Activated T-helper 2 cell treated with anti-CD3 and anti-CD28 coated beads, Interferon-gamma antibody, Interleukin-2, Interleukin-4, amounts not matched to agents 10 μg/mL and 5 μg/mL and 100 μg/mL, durations not matched to agents 14 hours and 24 hours and 36 hours (primary cell): ENCODE measurements at regions of chr6 and their contacts with region 1.

Region 1: GRCh38 chr6:41787219-41787917 is at the start of gene TOMM6:
- DNase-seq: peak; percentile 95
- H3K4me3 Mint-ChIP-seq: peak within 1 kb of the TSS; percentile 96
- H3K27ac Mint-ChIP-seq: peak within 1 kb of the TSS; percentile 97
- H3K4me1 Mint-ChIP-seq: peaks cover 15% of the 10 kb centered on the region
- H3K27me3 Mint-ChIP-seq: peaks cover 3% of the 10 kb centered on the region
- total RNA-seq, gene TOMM6: 308 and 316 TPM in 2 replicates

Region 2: DNA sequence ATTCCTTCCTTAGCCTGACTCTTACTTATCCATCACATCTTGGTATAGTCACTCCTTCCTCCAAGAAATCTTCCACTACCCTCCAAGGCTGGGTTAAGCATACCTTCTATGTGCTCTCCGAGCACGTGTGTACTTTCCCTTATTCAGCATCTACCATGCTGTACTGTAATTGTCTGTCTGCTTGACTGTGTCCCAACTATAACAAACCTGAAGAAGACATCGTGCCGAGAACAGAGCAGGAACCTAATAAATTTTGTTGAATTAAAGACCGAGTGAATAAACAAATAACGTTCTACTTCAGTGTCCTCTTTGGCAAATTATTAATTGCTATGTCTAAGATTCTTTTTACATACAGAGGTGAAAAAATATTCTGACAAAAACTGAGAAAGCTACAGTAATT is 72.0 kb after region 1 on chr6:
- intact Hi-C with region 1: no loop called
- DNase-seq: no peak
- H3K4me3 Mint-ChIP-seq: no peak overlapping the region
- H3K27ac Mint-ChIP-seq: no peak overlapping the region
- H3K4me1 Mint-ChIP-seq: no peaks in the 10 kb centered on the region
- H3K27me3 Mint-ChIP-seq: no peaks in the 10 kb centered on the region

Region 3: DNA sequence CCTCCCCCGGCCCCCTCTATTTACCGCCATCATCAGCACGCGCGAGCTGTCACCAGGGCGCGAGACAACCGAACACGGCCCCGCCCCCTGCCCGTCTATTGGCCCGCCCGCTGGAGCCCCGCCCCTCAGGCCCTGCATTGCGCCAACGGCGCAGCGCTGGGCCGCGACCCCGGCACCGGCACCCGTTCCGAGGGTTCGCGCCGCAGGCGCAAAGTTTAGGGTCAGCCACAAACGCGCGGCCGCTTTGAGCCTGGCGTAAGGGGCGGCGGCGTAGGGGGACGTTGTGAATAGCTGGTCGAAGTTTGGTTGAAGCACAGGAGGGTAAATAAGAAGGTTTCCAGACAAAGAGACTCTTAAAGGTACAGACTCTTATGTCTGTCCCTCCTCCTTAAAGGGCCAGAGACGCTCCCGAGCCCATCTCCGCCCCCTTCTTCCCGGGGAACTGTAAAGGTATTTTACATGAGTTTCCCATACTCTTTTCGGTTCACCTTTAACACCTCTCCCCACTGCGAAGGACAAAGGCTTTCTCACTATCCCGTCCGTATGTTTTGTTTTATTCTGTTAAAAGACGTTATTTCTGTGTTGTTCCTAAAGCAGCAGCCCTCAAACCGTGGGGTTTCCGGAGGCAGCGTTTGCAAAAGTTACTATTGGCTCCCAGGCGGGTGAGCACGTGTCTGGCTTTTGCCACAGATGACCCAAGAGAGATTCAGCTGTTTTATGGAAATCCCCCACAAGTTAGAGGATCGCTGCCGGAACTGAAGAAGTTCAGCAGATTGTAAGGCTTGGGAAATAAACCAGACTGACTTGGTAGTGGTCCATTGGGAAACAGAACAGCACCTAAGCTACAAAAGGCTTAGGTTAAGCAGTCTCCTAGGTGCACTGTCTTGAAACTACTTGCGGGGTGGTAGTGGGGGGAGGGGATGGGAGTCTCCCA is 108.2 kb after region 1 on chr6 and contains the start of gene USP49:
- intact Hi-C with region 1: loop called (anchors 1 kb)
- DNase-seq: peak; percentile 86
- H3K4me3 Mint-ChIP-seq: no peak within 1 kb of the TSS
- H3K27ac Mint-ChIP-seq: peak within 1 kb of the TSS; percentile 88
- H3K4me1 Mint-ChIP-seq: peaks cover 8% of the 10 kb centered on the region
- H3K27me3 Mint-ChIP-seq: no peaks in the 10 kb centered on the region
- total RNA-seq, gene USP49: 6.1 and 6.4 TPM in 2 replicates

Region 4: DNA sequence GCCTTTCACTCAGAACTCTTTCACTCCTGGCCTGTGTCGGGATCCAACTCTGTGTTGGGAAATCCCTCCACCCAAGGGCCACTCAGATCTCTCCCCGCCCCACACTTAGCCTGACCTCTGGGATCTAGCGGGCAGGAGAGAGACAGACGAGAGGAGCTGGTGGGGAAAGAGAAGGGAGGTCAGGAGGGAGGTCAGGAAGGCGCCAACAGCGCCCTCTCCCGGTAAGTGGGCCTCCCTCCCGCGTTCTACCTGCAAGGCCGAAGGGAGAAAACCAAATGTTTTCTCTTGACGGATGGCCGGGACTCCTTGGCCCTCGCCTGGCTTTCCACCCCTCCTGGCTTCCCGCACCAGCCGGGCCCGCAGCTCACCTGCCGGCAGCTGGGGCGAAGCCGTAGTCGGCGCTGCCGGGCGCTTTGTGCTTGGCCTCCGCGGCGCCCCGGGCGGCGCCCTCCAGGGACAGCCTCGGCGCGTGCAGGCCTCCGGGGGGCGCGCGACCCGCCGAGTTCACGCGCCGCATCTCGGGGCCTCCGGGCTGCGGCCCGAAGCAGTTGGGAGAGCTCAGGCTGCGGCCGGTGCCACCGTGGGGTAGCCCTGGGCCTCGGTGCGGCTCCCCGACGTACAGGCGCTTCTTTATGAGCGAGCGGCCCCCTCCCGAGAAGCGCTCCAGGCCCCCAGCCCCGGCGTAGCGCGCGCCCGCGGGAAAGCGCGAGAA is 316.9 kb after region 1 on chr6:
- intact Hi-C with region 1: loop called (anchors 2 kb)
- DNase-seq: peak; percentile 66
- H3K4me3 Mint-ChIP-seq: peak overlapping the region; percentile 63
- H3K27ac Mint-ChIP-seq: peak overlapping the region; percentile 51
- H3K4me1 Mint-ChIP-seq: peaks cover 21% of the 10 kb centered on the region
- H3K27me3 Mint-ChIP-seq: no peaks in the 10 kb centered on the region

Region 5: DNA sequence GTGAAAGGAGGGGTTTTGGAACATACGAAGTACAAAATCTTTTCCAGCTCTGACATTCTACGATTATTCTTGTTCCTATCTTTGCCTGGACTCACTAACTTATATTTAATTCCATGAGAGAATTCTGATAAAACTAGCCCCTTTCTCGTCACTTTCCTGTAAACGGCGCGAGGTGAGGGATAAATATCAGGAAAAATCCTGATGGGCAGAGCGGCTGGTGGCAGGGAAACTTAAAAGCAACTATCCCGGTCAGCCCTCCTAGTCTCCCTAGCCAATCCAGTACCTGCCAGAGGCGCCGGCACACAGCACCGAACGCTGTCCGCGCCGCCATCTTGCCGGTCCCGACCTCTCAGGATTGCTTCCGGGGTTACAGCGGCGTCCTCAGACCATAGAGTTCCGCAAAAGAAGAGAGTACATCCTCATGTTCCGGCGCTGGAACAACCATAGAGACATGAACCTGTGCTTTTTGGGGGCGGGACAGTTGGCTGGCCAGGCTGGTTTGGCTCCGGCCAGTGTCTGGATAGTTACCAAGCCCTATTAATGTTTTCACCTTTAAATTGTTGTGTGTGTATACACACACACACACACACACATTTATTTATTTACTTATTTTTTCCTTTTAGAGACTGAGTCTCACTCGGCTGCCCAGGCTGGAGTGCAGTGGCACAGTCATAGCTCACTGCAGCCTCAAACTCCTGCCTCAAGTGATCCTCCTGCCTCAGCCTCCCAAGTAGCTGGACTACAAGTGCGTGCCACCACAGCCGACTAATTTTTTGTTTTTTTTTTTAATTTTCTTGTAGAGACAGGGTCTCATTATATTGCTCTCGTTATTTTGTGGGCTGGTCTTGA is 430.4 kb after region 1 on chr6 and contains the start of gene MRPS10:
- intact Hi-C with region 1: loop called (anchors 1 kb)
- DNase-seq: peak; percentile 88
- H3K4me3 Mint-ChIP-seq: peak within 1 kb of the TSS; percentile 95
- H3K27ac Mint-ChIP-seq: peak within 1 kb of the TSS; percentile 91
- H3K4me1 Mint-ChIP-seq: peaks cover 20% of the 10 kb centered on the region
- H3K27me3 Mint-ChIP-seq: no peaks in the 10 kb centered on the region
- total RNA-seq, gene MRPS10: 39.6 and 40.4 TPM in 2 replicates